BJ (cell line): ENCODE measurements at regions of chr15 and their contacts with region 1.

Region 1: DNA sequence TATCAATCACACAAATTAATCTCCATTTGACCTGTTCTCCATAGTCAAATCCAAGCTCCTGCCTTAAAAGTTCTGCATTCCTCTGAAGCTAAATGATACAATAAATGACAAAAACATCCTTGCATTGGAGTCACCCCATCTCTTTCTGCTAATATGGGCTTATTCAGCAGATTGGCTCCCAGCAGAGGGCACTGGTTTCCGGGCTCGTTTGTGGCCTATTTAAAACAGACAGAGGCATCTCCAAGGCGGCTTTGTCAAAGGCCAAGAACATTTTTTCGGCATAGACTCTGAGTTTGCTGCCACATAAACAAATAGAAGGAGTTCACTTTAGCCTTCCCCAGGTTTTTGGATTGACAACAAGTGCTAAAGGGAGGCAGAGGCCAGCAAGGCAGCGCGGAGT is 204.4 kb upstream of the RASGRP1 start:
- DNase-seq: no peak
- H3K4me3 ChIP-seq: no peak overlapping the region
- H3K27me3 ChIP-seq: no peaks in the 10 kb centered on the region
- CTCF ChIP-seq: peak; percentile 40

Region 2: DNA sequence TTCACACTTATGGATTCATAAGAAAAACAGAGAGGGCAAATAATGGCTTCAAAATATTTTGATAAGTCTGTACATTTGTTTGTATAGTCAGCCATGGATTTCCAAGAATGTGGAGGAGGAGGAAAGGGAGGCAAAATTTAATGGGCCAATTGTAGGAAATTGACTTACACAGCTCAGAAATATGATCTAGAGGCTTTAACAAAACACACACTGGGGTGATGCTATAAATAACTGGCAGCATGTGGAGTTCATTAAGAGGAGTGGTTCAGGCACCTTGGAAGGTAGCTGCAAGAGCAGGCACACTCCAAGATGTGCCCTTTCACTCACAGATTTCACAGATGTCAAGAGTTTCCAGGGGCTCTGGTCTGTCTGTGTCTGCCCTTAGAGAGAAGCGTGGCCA is 10.9 kb before region 1 on chr15:
- CTCF ChIA-PET with region 1: interaction called, 12 read pairs
- POLR2A ChIA-PET with region 1: no interaction called
- DNase-seq: peak; percentile 71
- H3K4me3 ChIP-seq: no peak overlapping the region
- H3K27me3 ChIP-seq: peaks cover 1% of the 10 kb centered on the region; the same call in 1 of the 2 replicates
- CTCF ChIP-seq: no peak

Region 3: DNA sequence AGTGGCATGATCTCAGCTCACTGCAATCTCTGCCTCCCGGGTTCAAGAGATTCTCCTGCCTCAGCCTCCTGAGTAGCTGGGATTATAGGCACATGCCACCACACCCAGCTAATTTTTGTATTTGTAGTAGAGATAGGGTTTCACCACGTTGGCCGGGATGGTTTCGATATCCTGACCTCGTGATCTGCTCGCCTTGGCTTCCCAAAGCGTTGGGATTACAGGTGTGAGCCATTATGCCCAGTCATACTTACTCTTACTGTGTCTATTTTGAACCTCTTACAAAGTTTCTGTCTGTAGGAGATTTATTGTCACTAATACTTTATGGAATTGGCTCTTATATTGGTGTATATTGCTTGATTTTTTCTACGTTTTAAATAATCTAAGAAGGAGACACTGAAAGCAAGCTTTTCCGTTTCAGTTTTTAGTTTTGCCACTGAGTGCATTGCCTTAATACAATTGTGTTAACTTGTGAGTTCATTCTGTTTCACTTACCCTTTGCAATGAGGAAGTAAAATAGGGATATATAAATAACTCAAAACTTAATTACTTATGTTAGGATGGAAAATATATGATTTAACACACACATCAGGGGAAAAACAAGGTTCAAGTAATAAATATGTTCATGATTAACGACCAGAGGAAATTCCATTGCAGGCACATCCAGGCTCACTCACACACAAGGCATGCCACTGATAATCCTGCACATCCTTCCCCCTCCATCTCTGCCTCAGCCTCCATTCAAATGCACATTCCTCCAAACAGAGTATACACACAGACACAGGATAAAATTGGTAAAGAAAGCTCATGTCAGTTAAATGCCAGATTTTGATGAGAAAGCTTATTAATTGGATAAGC is 75.0 kb after region 1 on chr15:
- CTCF ChIA-PET with region 1: no interaction called
- POLR2A ChIA-PET with region 1: no interaction called
- DNase-seq: peak; percentile 74
- H3K4me3 ChIP-seq: no peak overlapping the region
- H3K27me3 ChIP-seq: no peaks in the 10 kb centered on the region
- CTCF ChIP-seq: no peak

Region 4: GRCh38 chr15:39834256-39834655 is 1065.3 kb after region 1 on chr15:
- CTCF ChIA-PET with region 1: no interaction called
- POLR2A ChIA-PET with region 1: no interaction called
- DNase-seq: peak; percentile 59
- H3K4me3 ChIP-seq: no peak overlapping the region
- H3K27me3 ChIP-seq: no peaks in the 10 kb centered on the region
- CTCF ChIP-seq: no peak